Activated CD4-positive, alpha-beta T cell treated with anti-CD3 and anti-CD28 coated beads, Interleukin-2, amount 10 ng/mL, durations not matched to agents 7 days and 5 days (primary cell): ENCODE measurements at regions of chr22 and their contacts with region 1.

Region 1: DNA sequence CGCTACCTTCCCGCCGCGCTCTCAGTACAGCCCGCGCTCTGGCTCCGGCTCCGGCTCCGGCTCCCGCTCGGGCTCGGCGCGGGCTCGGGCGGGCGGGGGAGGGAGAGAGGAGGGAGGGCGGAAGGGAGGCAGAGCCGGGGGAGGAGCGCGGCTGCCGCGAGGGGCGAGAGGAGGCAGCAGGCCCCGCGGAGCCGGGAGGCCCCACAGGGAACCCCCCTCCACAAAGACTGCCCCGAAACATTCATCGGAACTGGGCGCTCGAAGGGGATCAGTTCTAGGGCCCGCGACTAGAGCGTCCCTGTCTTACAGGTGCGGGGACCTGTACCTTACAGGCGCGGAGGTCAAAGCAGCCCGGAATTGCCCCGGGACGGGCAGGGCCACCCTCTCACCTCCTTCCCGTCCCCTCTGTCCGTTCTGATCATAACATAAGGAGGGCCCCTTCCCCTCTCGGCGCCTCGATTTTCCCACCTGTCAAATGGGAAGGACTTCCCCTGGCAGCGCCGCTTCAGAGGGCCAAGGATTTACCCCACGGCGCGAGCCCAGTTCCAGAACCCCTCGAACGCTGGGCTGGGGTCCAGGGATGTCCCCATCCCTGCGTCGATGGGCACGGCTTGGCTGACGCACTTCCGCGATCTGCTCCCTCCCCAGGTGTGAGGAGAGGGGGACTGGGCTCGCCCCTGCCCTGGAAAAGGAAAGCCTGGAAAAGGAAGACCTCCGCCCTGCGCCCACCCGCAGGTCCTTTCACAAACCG is at the start of gene SHISA8:
- DNase-seq: peak; percentile 57
- H3K4me3 Mint-ChIP-seq: peak within 1 kb of the TSS; percentile 20
- H3K27ac Mint-ChIP-seq: no peak within 1 kb of the TSS
- H3K4me1 Mint-ChIP-seq: peaks cover 27% of the 10 kb centered on the region
- H3K27me3 Mint-ChIP-seq: peaks cover 56% of the 10 kb centered on the region
- total RNA-seq, gene SHISA8: not detected

Region 2: DNA sequence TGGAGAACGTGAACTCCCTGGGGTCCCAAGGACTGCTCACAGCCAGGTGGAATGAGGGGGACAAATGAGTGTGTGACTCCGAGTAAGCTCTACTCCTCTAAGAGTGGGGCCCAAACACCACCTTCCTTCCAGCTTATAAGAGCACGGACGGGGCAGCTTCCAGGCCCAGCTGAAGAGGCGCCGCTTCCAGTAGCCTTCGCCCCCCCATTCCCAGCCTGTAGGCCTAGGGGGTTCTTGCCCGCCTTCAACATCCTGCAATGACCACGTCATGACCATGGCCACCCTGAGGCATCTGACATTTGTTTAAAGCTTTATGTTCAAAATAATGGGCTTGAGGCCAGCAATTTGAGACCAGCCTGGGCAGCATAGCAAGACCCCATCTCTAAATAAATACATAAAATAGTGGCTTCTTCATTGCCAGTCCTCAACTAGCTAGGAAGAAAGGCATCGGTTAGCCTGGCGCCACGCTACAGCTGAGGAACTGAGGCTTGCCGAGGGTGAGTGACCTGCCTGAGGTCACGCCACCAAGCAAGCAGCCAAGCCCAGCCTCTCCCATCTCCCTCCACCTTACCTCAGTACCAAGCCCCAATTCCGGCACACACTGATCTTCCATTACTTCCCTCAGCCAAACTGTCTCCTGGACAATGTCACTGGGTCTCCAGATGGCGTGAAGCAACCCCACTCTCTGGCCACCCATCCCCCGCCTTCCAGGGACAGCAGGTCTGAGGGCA is 19.2 kb after region 1 on chr22:
- CTCF ChIA-PET with region 1: no interaction called
- POLR2A ChIA-PET with region 1: no interaction called
- DNase-seq: no peak
- H3K4me3 Mint-ChIP-seq: no peak overlapping the region
- H3K27ac Mint-ChIP-seq: no peak overlapping the region
- H3K4me1 Mint-ChIP-seq: peaks cover 3% of the 10 kb centered on the region
- H3K27me3 Mint-ChIP-seq: no peaks in the 10 kb centered on the region

Region 3: GRCh38 chr22:42788021-42788420 is 872.8 kb after region 1 on chr22:
- CTCF ChIA-PET with region 1: no interaction called
- POLR2A ChIA-PET with region 1: interaction called, 13 read pairs
- DNase-seq: no peak
- H3K4me3 Mint-ChIP-seq: no peak overlapping the region
- H3K27ac Mint-ChIP-seq: no peak overlapping the region
- H3K4me1 Mint-ChIP-seq: no peaks in the 10 kb centered on the region
- H3K27me3 Mint-ChIP-seq: no peaks in the 10 kb centered on the region